H1 (cell line): ENCODE measurements at regions of chr4 and their contacts with region 1.

Region 1: DNA sequence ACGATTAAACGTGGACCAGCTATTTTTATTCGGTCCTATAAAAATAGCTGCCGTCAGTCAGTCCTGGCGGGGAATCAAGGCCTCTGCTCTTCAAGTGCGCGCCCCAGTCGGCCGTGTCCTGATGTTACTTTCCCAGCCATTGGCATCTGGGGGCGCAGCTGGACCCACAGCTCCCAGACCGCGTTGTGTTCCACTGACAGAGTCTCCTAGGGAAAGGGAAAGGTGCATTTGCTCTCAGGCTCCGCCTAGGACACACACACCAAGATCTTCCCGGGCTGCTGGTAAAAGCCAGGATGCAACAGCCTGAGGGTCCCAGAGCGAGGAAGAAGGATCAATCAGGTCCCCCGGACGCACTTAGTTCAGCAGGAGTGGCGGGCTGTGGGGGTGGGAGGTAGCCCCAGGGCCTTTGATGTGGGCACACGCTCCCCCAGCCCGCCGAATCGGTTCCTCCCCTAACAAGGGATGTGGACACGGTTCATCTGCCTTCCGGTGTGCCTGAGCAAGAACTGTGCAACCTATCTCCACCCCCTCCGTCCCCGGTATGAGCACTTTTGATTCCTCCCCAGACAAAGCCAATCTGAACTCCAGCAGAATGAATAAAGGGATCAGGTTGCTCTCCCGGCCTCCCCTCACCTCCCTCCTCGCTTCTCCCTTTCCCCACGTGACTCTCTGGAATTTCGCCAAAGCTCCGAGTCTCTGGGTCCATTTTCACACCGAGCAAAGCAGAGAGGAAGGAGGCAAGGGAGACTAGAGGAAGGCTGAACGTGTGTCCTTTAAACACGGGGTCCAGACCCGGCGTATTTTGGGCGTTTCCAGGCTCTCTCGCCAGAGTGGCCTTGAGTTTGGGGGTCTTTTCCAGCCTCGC is 626 bp upstream of the FRAS1 start:
- DNase-seq: peak in 1 of 2 experiments; percentile 84
- H3K4me3 ChIP-seq: peak overlapping the region; percentile 90 to 100 (median 96)
- H3K27ac ChIP-seq: peak overlapping the region; percentile 70
- H3K4me1 ChIP-seq: peaks cover 3 to 10% (median 5%) of the 10 kb centered on the region in 4 experiments; a peak in 4 of 7 replicates
- H3K27me3 ChIP-seq: no peaks in the 10 kb centered on the region
- CTCF ChIP-seq: peak; percentile 30 to 42 (median 40)
- EP300 ChIP-seq: no peak
- POLR2A ChIP-seq: peak; percentile 70 to 93
- RAD21 ChIP-seq: peak; percentile 18 to 46; a peak in 2 of 4 replicates

Region 2: DNA sequence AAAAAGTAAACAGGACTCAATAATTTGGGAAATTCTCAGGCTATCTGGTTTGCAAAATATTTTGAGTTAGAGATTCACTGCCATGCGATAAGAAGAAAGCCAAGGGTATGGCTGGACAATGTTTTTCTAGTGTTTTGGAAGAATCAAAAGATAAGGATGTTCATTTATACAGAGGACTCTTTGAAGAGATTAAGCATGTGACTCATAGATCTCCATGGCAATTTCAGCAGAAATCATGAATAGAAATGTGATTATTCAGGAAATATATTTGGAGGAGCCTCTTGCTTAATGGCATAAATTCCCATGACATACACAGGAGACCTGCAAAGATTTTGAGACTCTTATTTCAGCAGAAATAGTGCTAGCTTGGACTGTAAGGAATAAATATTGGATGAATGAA is 16.1 kb before region 1 on chr4:
- CTCF ChIA-PET with region 1: interaction called, 10 read pairs
- POLR2A ChIA-PET with region 1: interaction called, 44 read pairs
- DNase-seq: no peak
- H3K4me3 ChIP-seq: no peak overlapping the region
- H3K27ac ChIP-seq: no peak overlapping the region
- H3K4me1 ChIP-seq: no peaks in the 10 kb centered on the region
- H3K27me3 ChIP-seq: no peaks in the 10 kb centered on the region
- CTCF ChIP-seq: no peak
- EP300 ChIP-seq: no peak
- POLR2A ChIP-seq: no peak
- RAD21 ChIP-seq: no peak

Region 3: GRCh38 chr4:78079726-78080430 is 23.4 kb after region 1 on chr4:
- CTCF ChIA-PET with region 1: interaction called, 19 read pairs
- POLR2A ChIA-PET with region 1: interaction called, 12 read pairs
- DNase-seq: no peak
- H3K4me3 ChIP-seq: no peak overlapping the region
- H3K27ac ChIP-seq: no peak overlapping the region
- H3K4me1 ChIP-seq: peaks cover 0 to 20% (median 12%) of the 10 kb centered on the region in 4 experiments; a peak in 6 of 7 replicates
- H3K27me3 ChIP-seq: no peaks in the 10 kb centered on the region
- CTCF ChIP-seq: no peak
- EP300 ChIP-seq: no peak
- POLR2A ChIP-seq: no peak
- RAD21 ChIP-seq: no peak

Region 4: DNA sequence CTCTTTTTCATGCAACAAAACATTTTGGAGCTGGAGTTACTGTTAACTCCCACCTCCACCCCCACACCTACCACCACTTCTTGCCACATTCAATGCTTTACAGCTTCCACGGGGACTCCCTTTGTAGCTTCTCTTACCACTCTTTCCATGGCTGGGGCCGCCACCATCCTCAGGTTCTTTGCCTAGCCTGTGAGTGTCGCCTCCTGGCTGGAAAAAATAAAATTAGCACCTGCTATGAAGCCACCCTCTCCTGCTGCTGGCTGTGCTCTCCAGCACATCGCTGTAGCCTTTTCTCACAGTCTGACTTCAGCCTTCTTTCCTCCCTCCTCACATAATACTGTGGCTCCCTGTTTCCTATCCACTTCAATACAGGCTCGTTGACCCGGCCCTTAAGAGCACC is 115.0 kb after region 1 on chr4:
- CTCF ChIA-PET with region 1: interaction called, 49 read pairs
- POLR2A ChIA-PET with region 1: interaction called, 8 read pairs
- DNase-seq: no peak
- H3K4me3 ChIP-seq: no peak overlapping the region
- H3K27ac ChIP-seq: no peak overlapping the region
- H3K4me1 ChIP-seq: peaks cover 3 to 35% (median 23%) of the 10 kb centered on the region in 4 experiments; a peak in 6 of 7 replicates
- H3K27me3 ChIP-seq: no peaks in the 10 kb centered on the region
- CTCF ChIP-seq: peak; percentile 48 to 66 (median 52); a peak in 3 of 4 replicates
- EP300 ChIP-seq: no peak
- POLR2A ChIP-seq: no peak
- RAD21 ChIP-seq: peak; percentile 41 to 60

Region 5: GRCh38 chr4:78369679-78370078 is 313.2 kb after region 1 on chr4:
- CTCF ChIA-PET with region 1: interaction called, 11 read pairs
- POLR2A ChIA-PET with region 1: no interaction called
- DNase-seq: no peak
- H3K4me3 ChIP-seq: no peak overlapping the region
- H3K27ac ChIP-seq: no peak overlapping the region
- H3K4me1 ChIP-seq: peaks cover 0 to 17% (median 4%) of the 10 kb centered on the region in 4 experiments; a peak in 4 of 7 replicates
- H3K27me3 ChIP-seq: no peaks in the 10 kb centered on the region
- CTCF ChIP-seq: no peak
- EP300 ChIP-seq: no peak
- POLR2A ChIP-seq: no peak
- RAD21 ChIP-seq: peak in 1 of 2 experiments; percentile 19; a peak in 1 of 4 replicates

Region 6: GRCh38 chr4:78923464-78924312 is 867.2 kb after region 1 on chr4:
- CTCF ChIA-PET with region 1: no interaction called
- POLR2A ChIA-PET with region 1: no interaction called
- DNase-seq: no peak
- H3K4me3 ChIP-seq: no peak overlapping the region
- H3K27ac ChIP-seq: no peak overlapping the region
- H3K4me1 ChIP-seq: no peaks in the 10 kb centered on the region
- H3K27me3 ChIP-seq: no peaks in the 10 kb centered on the region
- CTCF ChIP-seq: no peak
- EP300 ChIP-seq: no peak
- POLR2A ChIP-seq: no peak
- RAD21 ChIP-seq: no peak